ENCODE measurements at regions of chr17 and their contacts with region 1.

Region 1: DNA sequence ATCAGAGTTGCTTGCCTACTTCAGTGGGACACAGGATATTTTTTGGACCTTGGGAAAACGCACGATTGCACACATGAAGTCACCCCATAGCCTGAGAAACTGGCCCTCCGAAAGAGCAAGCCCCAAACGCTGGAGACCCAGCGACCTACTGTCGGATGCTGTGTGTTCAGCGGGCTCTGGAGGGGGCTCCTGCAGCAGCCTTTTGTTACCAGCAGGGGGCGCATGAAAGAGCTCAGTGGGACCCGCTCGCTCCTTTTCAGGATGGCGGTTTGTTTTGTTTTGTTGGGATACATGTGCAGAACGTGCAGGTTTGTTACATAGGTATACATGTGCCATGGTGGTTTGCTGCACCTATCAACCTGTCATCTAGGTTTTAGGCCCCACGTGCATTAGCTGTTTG is 28.4 kb downstream of the MYH3 start:
- DNase-seq: no peak
- ATAC-seq: no peak
- H3K4me3 ChIP-seq: no peak overlapping the region
- H3K27ac ChIP-seq: no peak overlapping the region
- H3K4me1 ChIP-seq: no peaks in the 10 kb centered on the region
- H3K27me3 ChIP-seq: no peaks in the 10 kb centered on the region
- CTCF ChIP-seq: peak in 1 of 2 donors; percentile 55

Region 2: GRCh38 chr17:9924735-9925191 is 704.0 kb before region 1 on chr17:
- intact Hi-C with region 1: loop called in 1 of 2 experiments (anchors 10 kb)
- DNase-seq: peak in 2 of 4 donors; percentile 65 to 73
- ATAC-seq: peak; percentile 83
- H3K4me3 ChIP-seq: no peak overlapping the region
- H3K27ac ChIP-seq: no peak overlapping the region
- H3K4me1 ChIP-seq: no peaks in the 10 kb centered on the region
- H3K27me3 ChIP-seq: peaks cover 0 to 7% of the 10 kb centered on the region in 2 donors
- CTCF ChIP-seq: peak; percentile 78 to 86

Region 3: GRCh38 chr17:10516065-10516464 is 112.7 kb before region 1 on chr17:
- intact Hi-C with region 1: no loop called
- DNase-seq: no peak
- ATAC-seq: no peak
- H3K4me3 ChIP-seq: no peak overlapping the region
- H3K27ac ChIP-seq: no peak overlapping the region
- H3K4me1 ChIP-seq: no peaks in the 10 kb centered on the region
- H3K27me3 ChIP-seq: peaks cover 0 to 5% of the 10 kb centered on the region in 2 donors
- CTCF ChIP-seq: no peak

Region 4: GRCh38 chr17:10683853-10684252 is 55.1 kb after region 1 on chr17:
- intact Hi-C with region 1: no loop called
- DNase-seq: no peak
- ATAC-seq: no peak
- H3K4me3 ChIP-seq: no peak overlapping the region
- H3K27ac ChIP-seq: no peak overlapping the region
- H3K4me1 ChIP-seq: no peaks in the 10 kb centered on the region
- H3K27me3 ChIP-seq: no peaks in the 10 kb centered on the region
- CTCF ChIP-seq: peak; percentile 15 to 27

Region 5: GRCh38 chr17:10743316-10744009 is 114.7 kb after region 1 on chr17:
- intact Hi-C with region 1: no loop called
- DNase-seq: no peak
- ATAC-seq: peak; percentile 20
- H3K4me3 ChIP-seq: no peak overlapping the region
- H3K27ac ChIP-seq: no peak overlapping the region
- H3K4me1 ChIP-seq: no peaks in the 10 kb centered on the region
- H3K27me3 ChIP-seq: no peaks in the 10 kb centered on the region
- CTCF ChIP-seq: no peak